Transverse colon (tissue), 4 donors: ENCODE measurements at regions of chr7 and their contacts with region 1.

Region 1: DNA sequence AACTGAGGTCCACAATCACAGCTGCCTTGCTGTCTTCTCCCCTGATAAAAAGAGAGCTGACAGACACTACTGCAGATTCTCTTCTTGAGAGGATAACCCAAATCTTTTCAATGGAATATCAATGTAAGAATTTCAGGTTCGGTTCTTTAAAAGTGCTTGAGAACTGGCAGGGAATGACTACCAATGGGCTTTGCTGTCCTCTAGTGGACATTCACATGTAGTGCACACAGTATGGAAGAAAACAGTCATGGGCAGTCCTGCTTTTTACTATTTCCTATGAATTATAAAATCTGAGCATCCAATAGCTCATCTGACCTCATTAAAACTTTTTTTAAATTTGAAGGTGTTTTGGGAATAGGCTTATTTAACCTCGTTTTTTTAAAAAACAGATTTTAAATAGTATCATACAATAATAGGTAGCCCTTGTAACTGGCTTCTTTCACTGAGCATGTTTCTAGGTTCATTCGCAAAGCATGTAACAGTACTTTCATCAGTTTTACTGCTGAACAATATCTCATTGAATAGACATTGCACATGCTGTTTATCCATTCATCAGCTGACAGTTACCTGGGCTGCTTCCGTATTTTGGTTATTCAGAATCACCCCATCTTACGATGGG is 18.3 kb downstream of the FZD9 start:
- DNase-seq: no peak
- H3K4me3 ChIP-seq: no peak overlapping the region
- H3K27ac ChIP-seq: no peak overlapping the region
- H3K4me1 ChIP-seq: no peaks in the 10 kb centered on the region
- H3K27me3 ChIP-seq: no peaks in the 10 kb centered on the region
- CTCF ChIP-seq: peak; percentile 97 to 99 (median 98)
- EP300 ChIP-seq: no peak
- POLR2A ChIP-seq: no peak

Region 2: DNA sequence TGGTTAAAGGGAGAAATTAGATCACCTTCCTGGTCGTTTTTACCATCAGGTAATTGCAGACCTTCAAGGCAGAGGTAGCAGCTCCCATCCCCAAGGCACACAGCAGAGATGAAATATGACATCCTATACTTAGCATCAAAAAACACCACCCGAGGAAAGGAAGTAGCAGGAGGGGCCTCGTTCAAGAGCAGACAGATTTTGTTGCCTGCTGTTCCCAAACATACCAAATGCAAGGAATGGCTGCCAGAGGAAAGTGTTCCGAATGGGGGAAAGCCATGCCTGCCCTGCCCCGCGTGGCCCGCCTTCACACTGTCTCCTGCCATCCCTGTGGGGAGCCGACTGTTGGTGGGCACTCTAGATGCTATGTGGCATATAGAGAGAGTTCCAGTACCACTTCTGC is 105.9 kb before region 1 on chr7:
- in situ Hi-C with region 1: no loop called
- intact Hi-C with region 1: loop called (anchors 5 kb)
- DNase-seq: no peak
- H3K4me3 ChIP-seq: no peak overlapping the region
- H3K27ac ChIP-seq: no peak overlapping the region
- H3K4me1 ChIP-seq: no peaks in the 10 kb centered on the region
- H3K27me3 ChIP-seq: no peaks in the 10 kb centered on the region
- CTCF ChIP-seq: no peak
- EP300 ChIP-seq: no peak
- POLR2A ChIP-seq: no peak

Region 3: GRCh38 chr7:73578342-73579127 is 126.6 kb after region 1 on chr7 and contains the start of gene TBL2:
- in situ Hi-C with region 1: no loop called
- intact Hi-C with region 1: no loop called
- DNase-seq: peak; percentile 100
- H3K4me3 ChIP-seq: peak within 1 kb of the TSS; percentile 83 to 95 (median 92)
- H3K27ac ChIP-seq: peak within 1 kb of the TSS; percentile 94 to 98 (median 97)
- H3K4me1 ChIP-seq: peaks cover 11 to 27% (median 19%) of the 10 kb centered on the region in 4 donors
- H3K27me3 ChIP-seq: no peaks in the 10 kb centered on the region
- CTCF ChIP-seq: peak in 2 of 5 experiments; percentile 2 to 13
- EP300 ChIP-seq: no peak
- POLR2A ChIP-seq: peak; percentile 87
- total RNA-seq, gene TBL2: 31.9 to 56.3 (median 46.2) TPM

Region 4: GRCh38 chr7:73842247-73842895 is 390.5 kb after region 1 on chr7 and contains the start of gene METTL27:
- in situ Hi-C with region 1: no loop called
- intact Hi-C with region 1: no loop called
- DNase-seq: peak; percentile 96
- H3K4me3 ChIP-seq: peak within 1 kb of the TSS; percentile 46 to 65 (median 58)
- H3K27ac ChIP-seq: peak within 1 kb of the TSS; percentile 81 to 84 (median 83)
- H3K4me1 ChIP-seq: peaks cover 8 to 25% (median 11%) of the 10 kb centered on the region in 4 donors
- H3K27me3 ChIP-seq: no peaks in the 10 kb centered on the region
- CTCF ChIP-seq: no peak
- EP300 ChIP-seq: no peak
- POLR2A ChIP-seq: peak; percentile 89
- total RNA-seq, gene METTL27: 2.6 to 29.5 (median 5.1) TPM